ENCODE measurements at regions of chr5 and their contacts with region 1.

Region 1: DNA sequence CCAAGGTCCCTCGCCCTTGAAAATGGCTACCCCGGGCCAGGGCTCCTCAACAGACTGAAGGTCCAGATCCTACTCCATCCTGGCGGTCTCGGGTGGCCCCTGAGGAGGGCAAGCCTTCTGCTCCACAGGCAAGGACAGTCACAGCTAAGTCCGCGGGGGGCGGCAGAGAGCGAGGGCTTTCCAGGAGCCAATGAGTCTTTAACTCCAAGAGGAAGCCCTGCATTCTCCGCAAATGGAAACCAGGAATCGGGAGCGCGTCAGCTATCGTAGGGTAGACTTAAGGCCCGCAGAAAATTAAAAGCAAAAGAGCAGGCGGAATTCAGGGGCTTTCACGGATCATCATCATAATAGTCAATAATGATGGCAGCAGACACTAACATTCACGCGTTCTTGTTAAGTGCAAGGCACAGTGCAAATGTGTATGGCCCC is 87.8 kb upstream of the TNFAIP8 start:
- DNase-seq: peak; percentile 83
- CTCF ChIP-seq: peak; percentile 81

Region 2: GRCh38 chr5:119161430-119161829 is 106.5 kb before region 1 on chr5:
- CTCF ChIA-PET with region 1: no interaction called
- POLR2A ChIA-PET with region 1: no interaction called
- DNase-seq: no peak
- CTCF ChIP-seq: no peak

Region 3: GRCh38 chr5:119179857-119180641 is 87.9 kb before region 1 on chr5:
- CTCF ChIA-PET with region 1: no interaction called
- POLR2A ChIA-PET with region 1: no interaction called
- DNase-seq: no peak
- CTCF ChIP-seq: no peak

Region 4: DNA sequence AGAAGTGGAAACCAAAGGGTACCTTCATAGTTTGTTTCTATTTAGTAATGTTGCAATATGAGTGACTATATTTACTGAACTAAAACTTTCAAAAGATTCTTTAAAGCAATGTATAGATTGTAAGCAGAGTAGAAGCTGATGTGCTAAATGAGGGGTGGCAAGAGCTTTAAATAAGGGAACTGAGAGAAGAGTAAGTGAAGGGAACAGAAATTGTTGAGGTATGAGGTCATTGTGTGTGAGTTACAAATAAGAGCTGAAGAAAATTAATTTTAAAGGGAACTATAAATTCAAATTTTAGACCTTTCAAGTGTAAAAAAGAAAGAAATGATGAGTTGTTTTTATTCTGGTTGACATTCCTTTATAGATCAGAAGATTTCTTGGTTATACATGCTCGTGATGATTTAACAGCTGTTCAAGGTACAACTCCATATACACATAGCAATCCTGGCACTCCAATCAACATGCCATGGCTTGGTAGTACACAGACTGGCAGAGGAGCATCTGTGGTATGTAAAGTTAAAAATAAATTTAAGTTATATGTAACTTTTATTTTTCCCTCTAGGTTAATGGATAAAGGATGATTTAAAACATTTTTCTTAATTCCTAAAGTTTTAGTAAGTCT is 47.3 kb before region 1 on chr5:
- CTCF ChIA-PET with region 1: interaction called, 15 read pairs
- POLR2A ChIA-PET with region 1: no interaction called
- DNase-seq: peak; percentile 46
- CTCF ChIP-seq: no peak

Region 5: GRCh38 chr5:119238265-119239118 is 29.5 kb before region 1 on chr5:
- CTCF ChIA-PET with region 1: interaction called, 13 read pairs
- POLR2A ChIA-PET with region 1: no interaction called
- DNase-seq: no peak
- CTCF ChIP-seq: no peak

Region 6: DNA sequence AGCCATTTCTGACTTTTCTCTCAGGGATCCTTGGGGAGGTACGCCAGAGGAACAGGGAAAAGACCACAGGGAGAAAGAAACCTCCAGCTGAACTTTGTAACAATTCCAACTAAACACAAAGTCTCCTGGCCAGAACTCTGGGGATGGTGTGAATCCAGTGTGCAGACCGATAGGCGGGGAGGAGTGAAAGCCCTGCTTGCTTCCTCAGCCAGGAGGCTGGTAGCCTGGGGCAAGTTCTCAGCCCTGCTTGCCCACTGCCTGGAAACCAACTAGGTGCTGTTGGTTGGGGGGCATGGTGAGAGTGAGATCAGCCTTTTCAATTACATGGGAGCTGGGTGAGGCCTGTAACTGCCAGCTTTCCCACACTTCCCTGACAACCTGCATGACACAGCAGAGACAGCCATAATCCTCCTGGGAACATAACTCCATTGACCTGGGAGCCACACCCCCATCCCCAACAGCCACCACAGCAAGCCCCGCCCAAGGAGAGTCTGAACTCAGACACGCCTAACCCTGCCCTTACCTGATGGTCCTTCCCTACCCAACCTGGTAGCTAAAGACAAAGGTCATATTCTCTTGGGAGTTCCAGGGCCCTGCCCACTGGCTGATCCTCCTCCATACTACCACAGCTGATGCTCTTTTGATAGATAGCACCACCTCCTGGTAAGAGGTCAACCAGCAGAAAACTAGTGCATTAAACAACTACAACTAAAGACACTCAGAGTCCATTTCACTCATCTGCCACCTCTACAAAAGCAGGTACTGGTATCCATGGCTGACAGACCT is 12.2 kb before region 1 on chr5:
- CTCF ChIA-PET with region 1: interaction called, 34 read pairs
- POLR2A ChIA-PET with region 1: no interaction called
- DNase-seq: peak; percentile 21
- CTCF ChIP-seq: no peak

Region 7: DNA sequence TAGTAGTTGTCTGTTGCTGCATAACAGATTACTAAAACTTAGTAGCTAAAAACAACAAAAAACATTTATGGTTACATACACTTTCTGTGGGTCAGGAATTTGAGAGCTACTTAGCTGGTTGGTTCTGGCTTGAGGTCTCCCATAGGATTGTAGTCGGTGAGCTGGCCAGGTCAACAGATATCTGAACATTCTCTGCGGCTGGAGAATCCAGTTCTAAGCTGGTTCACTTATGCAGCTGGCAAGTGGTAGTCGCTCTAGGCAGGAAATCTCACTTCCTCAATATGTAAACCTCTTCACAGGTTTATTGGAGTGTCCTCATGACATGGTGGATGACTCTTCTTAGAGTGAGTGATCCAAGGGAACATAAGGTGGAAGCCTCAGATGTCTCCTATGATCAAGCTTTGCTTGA is 22.2 kb after region 1 on chr5:
- CTCF ChIA-PET with region 1: interaction called, 14 read pairs
- POLR2A ChIA-PET with region 1: interaction called, 3 read pairs
- DNase-seq: peak; percentile 29
- CTCF ChIP-seq: no peak